Activated naive CD4-positive, alpha-beta T cell treated with anti-CD3 and anti-CD28 coated beads for 36 hours (primary cell): ENCODE measurements at regions of chrX and their contacts with region 1.

Region 1: GRCh38 chrX:106481341-106481740 is 130.4 kb upstream of the RADX start:
- DNase-seq: peak; percentile 54
- H3K4me3 Mint-ChIP-seq: no peak overlapping the region
- H3K27ac Mint-ChIP-seq: no peak overlapping the region
- H3K4me1 Mint-ChIP-seq: peaks cover 22% of the 10 kb centered on the region
- H3K27me3 Mint-ChIP-seq: no peaks in the 10 kb centered on the region

Region 2: GRCh38 chrX:106331606-106332005 is 149.7 kb before region 1 on chrX:
- CTCF ChIA-PET with region 1: no interaction called
- intact Hi-C with region 1: no loop called
- DNase-seq: no peak
- H3K4me3 Mint-ChIP-seq: no peak overlapping the region
- H3K27ac Mint-ChIP-seq: no peak overlapping the region
- H3K4me1 Mint-ChIP-seq: no peaks in the 10 kb centered on the region
- H3K27me3 Mint-ChIP-seq: no peaks in the 10 kb centered on the region

Region 3: DNA sequence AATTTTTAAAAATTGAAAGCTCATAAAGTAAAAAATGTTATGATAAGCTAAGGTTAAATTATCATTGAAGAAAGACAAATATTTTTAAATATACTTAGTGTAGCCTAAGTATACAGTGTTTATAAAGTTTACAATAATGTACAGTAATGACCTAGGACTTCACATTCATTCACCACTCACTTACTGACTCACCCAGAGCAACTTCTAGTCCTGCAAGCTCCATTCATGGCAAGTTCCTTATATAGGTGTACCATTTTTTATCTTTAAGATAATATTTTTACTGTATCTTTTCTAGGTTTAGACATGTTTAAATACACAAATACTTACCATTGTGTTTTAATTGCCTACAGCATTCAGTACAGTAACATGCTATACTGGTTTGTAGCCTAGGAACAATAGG is 18.1 kb after region 1 on chrX:
- CTCF ChIA-PET with region 1: interaction called, 4 read pairs
- intact Hi-C with region 1: loop called (anchors 2 kb)
- DNase-seq: no peak
- H3K4me3 Mint-ChIP-seq: no peak overlapping the region
- H3K27ac Mint-ChIP-seq: no peak overlapping the region
- H3K4me1 Mint-ChIP-seq: peaks cover 6% of the 10 kb centered on the region
- H3K27me3 Mint-ChIP-seq: no peaks in the 10 kb centered on the region

Region 4: DNA sequence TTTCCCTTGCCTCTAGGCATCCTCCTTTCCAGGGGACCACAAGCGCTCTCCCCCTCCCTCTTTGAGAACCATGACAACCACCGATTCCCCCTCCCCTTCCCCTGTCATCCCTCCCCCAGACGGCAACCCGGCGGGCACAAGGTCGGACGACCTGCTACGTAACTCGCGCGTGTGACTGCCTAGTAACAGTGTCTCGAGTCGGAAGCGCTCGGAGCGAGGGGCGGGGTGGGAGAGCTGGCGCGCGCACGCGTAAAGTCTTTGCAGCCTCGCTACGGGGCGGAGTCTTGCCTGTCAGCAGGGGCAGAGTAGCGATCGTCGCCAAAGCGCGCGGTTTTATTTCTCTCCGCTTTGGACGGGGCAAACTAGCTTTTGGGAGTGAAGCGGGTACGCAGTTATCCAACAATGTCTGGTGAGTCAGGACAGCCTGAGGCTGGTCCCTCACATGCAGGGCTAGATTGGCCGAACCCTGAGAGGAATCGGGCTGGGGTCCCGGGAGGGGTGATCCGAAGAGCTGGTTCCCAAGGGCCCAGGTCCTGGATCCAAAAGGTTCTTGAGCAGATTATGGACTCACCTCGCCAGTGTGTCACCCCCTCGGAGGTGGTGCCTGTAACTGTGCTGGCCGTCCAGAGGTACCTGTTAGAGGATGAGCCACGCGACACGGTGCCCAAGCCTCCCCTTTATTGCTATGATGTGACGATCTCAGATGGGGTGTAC is 130.5 kb after region 1 on chrX and contains the start of gene RADX:
- CTCF ChIA-PET with region 1: interaction called, 6 read pairs
- intact Hi-C with region 1: loop called (anchors 1 kb)
- DNase-seq: peak; percentile 89
- H3K4me3 Mint-ChIP-seq: peak within 1 kb of the TSS; percentile 87
- H3K27ac Mint-ChIP-seq: peak within 1 kb of the TSS; percentile 85
- H3K4me1 Mint-ChIP-seq: peaks cover 14% of the 10 kb centered on the region
- H3K27me3 Mint-ChIP-seq: no peaks in the 10 kb centered on the region
- total RNA-seq, gene RADX: 13.1 to 14.8 TPM

Region 5: GRCh38 chrX:106894392-106894909 is 413.1 kb after region 1 on chrX:
- CTCF ChIA-PET with region 1: interaction called, 6 read pairs
- intact Hi-C with region 1: loop called (anchors 10 kb)
- DNase-seq: peak; percentile 64
- H3K4me3 Mint-ChIP-seq: no peak overlapping the region
- H3K27ac Mint-ChIP-seq: no peak overlapping the region
- H3K4me1 Mint-ChIP-seq: peaks cover 5% of the 10 kb centered on the region
- H3K27me3 Mint-ChIP-seq: no peaks in the 10 kb centered on the region

Region 6: DNA sequence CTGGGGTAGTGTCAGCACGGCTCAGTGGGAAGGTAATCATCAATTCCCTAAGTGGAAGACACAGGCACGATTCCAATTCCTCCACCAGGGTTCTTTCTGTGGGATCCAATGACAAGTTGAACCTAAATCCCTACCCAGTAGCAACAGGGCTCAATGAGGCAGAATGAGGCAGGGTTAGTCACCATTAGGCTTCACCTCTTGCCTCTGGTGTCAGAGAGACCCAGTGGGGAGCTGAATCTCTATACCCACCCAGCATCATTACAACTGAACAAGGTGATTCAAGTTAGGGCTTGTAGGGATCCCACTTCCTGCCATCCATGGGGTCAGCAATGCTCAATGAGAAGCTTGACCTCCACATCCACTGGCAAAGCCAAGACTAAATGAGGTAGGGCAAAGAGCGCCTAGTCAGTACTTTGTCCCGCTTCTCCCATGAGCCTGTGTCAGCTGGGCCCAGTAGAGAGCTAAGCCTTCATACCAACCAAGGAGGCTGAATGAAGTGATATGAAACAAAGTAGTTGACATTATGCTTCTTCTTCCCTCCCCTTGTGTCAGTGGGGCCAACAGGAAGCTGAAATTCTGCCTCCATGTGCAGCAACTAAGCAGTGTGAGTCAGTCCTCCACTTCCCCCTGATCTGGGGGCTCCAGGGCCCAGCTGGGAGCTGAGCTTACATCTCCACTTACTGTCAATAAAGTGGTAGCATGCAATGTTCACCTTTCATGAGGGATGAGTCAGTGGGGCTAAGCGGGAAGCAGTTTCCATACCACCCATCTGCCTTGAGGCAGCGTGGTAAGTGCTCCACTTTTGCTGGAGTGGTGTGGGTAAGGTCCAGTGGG is 673.7 kb after region 1 on chrX:
- CTCF ChIA-PET with region 1: no interaction called
- intact Hi-C with region 1: loop called (anchors 10 kb)
- DNase-seq: peak; percentile 56
- H3K4me3 Mint-ChIP-seq: peak overlapping the region; percentile 59
- H3K27ac Mint-ChIP-seq: no peak overlapping the region
- H3K4me1 Mint-ChIP-seq: peaks cover 5% of the 10 kb centered on the region
- H3K27me3 Mint-ChIP-seq: no peaks in the 10 kb centered on the region

Region 7: GRCh38 chrX:107826238-107827029 is 1345.1 kb after region 1 on chrX:
- CTCF ChIA-PET with region 1: no interaction called
- intact Hi-C with region 1: loop called (anchors 10 kb)
- DNase-seq: peak; percentile 14
- H3K4me3 Mint-ChIP-seq: peak overlapping the region; percentile 77
- H3K27ac Mint-ChIP-seq: peak overlapping the region; percentile 73
- H3K4me1 Mint-ChIP-seq: peaks cover 53% of the 10 kb centered on the region
- H3K27me3 Mint-ChIP-seq: no peaks in the 10 kb centered on the region